ENCODE measurements at regions of chr5 and their contacts with region 1.

Region 1: GRCh38 chr5:142748568-142749249 is 21.5 kb upstream of the ARHGAP26 start:
- DNase-seq: peak; percentile 46 to 70
- ATAC-seq: peak; percentile 87

Region 2: DNA sequence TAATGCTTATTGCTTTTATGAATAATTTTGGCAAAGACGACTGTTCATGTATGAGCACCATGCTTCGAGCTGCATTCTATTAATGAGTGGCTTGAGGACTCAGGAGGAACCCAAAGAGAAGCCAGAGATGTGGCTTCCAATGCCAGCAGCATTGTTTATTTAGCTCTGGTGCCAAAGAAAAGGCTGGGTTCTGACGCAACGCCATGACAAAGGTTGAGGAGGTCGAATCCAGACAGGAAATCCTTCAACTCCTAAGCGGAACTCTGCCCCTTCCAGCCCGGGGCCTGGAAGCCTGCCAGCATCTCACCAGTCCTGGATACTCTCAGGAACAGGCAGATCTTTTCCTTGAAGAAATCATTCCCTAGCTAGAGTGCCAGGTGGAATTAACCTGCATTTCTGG is 125.8 kb after region 1 on chr5:
- intact Hi-C with region 1: loop called in 1 of 2 experiments (anchors 10 kb)
- DNase-seq: peak; percentile 93 to 94
- ATAC-seq: peak; percentile 68

Region 3: DNA sequence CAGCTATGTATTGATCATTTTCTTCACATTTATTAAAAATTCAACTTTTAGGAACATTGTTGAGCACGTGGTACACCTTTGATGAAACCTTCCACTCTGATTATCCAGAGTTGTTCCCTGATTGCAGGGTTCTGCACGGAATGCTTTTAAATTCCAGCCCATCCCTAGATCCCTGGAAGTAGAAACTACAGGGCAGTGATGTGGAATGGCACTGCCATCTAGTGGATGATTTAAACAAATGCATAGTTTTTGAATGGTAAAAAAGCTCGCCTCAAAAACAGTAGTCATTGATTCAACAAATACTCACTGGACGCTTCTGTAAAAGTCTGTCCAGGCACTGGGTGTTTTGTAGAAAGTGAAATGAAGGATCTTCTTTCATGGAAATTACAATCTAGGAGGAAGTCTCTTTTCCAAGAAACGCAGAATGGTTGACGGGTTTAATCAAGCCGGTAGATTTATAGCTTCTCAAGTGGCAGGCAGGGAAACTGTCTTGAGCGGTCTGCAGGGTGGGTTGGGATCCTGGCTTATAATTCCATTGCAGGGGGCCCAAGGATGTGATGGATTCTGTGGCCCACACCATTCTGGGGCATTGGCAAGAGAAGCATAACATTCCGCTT is 139.9 kb after region 1 on chr5:
- intact Hi-C with region 1: loop called in 1 of 2 experiments (anchors 10 kb)
- DNase-seq: no peak
- ATAC-seq: peak; percentile 83